ENCODE measurements at regions of chr7 and their contacts with region 1.

Region 1: DNA sequence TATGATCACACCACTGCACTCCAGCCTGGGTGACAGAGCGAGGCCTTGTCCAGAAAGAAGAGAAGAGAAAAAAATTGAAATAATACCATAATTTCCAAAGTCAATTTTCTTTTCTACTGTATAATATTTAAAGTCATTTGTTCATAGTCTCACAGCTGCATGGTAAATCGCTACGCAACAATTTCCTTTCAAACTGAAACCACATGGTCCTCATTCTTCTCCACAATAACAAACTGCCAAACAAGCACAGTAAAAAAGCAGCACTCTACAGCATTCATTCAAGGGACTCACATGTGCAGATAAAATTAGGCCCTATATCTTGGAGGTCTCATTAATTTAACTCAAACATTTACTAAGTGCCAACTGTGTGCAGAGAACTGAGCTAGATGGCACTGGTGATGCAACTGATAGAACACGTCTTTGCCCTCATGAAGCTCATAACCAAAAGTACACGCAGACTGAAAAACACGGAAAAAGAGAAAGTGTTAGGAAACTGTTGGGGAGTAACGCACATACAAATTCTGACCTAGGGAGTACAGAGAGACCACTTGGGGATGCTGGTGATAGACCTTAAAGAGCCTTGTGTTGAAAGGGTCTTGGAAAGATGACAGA is 68.4 kb upstream of the SRRM3 start:
- DNase-seq: no peak
- H3K4me3 Mint-ChIP-seq: peak overlapping the region; percentile 1
- H3K27ac Mint-ChIP-seq: no peak overlapping the region
- H3K4me1 Mint-ChIP-seq: peaks cover 9% of the 10 kb centered on the region
- H3K27me3 Mint-ChIP-seq: peaks cover 16% of the 10 kb centered on the region

Region 2: GRCh38 chr7:75878769-75879611 is 254.3 kb before region 1 on chr7 and contains the start of gene RHBDD2:
- CTCF ChIA-PET with region 1: no interaction called
- POLR2A ChIA-PET with region 1: no interaction called
- intact Hi-C with region 1: loop called (anchors 10 kb)
- DNase-seq: peak; percentile 98
- H3K4me3 Mint-ChIP-seq: peak within 1 kb of the TSS; percentile 96
- H3K27ac Mint-ChIP-seq: peak within 1 kb of the TSS; percentile 90
- H3K4me1 Mint-ChIP-seq: peaks cover 29% of the 10 kb centered on the region
- H3K27me3 Mint-ChIP-seq: no peaks in the 10 kb centered on the region
- total RNA-seq, gene RHBDD2: 30.1 to 31.9 TPM

Region 3: DNA sequence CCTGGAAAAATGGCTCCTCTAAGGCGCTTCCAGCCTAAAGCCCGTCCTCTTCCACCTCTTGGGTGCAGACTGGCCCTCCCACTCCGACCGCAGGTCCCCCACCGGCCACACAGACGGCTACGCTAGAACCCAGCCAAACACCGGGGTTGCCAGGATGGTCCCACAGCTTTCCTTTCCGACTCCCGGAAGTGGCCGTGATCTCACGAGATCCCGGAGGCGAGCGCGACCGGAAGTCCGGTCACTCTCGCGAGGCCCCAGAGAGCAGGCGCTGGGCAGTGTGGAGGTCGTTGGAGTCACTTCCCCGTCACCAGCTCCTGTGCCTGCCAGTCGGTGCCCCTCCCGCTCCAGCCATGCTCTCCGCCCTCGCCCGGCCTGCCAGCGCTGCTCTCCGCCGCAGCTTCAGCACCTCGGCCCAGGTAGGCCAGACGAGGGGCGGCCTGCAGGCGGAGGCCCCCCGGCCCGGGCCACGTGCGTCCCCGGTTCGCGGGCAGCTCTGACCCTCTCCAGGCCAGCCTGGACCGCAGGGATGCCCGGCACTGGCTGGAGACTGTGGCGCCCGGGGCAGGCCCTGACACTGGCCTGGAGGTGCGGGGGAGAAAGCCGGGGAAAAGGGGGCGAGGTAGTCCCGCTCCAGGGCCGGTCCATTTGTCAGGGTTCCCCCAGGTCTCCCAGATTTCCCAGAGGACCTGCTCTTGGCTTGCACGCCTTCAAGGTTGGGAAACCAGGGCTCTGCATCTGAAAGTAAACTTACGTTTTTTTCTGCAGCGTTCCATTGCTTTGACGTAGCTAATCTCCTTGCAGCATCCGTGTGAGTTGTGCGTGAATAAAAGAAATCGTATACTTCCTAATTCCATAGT is 85.2 kb before region 1 on chr7 and contains the starts of genes MDH2 and STYXL1:
- CTCF ChIA-PET with region 1: no interaction called
- POLR2A ChIA-PET with region 1: interaction called, 3 read pairs
- intact Hi-C with region 1: loop called (anchors 2 kb)
- DNase-seq: peak; percentile 96
- H3K4me3 Mint-ChIP-seq: peak within 1 kb of the TSS; percentile 92
- H3K27ac Mint-ChIP-seq: peak within 1 kb of the TSS; percentile 90
- H3K4me1 Mint-ChIP-seq: peaks cover 42% of the 10 kb centered on the region
- H3K27me3 Mint-ChIP-seq: no peaks in the 10 kb centered on the region
- total RNA-seq, gene MDH2: 259 to 271 TPM
- total RNA-seq, gene STYXL1: 37.8 to 40.5 TPM

Region 4: GRCh38 chr7:76155938-76156337 is 22.7 kb after region 1 on chr7:
- CTCF ChIA-PET with region 1: no interaction called
- POLR2A ChIA-PET with region 1: no interaction called
- intact Hi-C with region 1: loop called (anchors 1 kb)
- DNase-seq: no peak
- H3K4me3 Mint-ChIP-seq: no peak overlapping the region
- H3K27ac Mint-ChIP-seq: no peak overlapping the region
- H3K4me1 Mint-ChIP-seq: peaks cover 15% of the 10 kb centered on the region
- H3K27me3 Mint-ChIP-seq: no peaks in the 10 kb centered on the region

Region 5: DNA sequence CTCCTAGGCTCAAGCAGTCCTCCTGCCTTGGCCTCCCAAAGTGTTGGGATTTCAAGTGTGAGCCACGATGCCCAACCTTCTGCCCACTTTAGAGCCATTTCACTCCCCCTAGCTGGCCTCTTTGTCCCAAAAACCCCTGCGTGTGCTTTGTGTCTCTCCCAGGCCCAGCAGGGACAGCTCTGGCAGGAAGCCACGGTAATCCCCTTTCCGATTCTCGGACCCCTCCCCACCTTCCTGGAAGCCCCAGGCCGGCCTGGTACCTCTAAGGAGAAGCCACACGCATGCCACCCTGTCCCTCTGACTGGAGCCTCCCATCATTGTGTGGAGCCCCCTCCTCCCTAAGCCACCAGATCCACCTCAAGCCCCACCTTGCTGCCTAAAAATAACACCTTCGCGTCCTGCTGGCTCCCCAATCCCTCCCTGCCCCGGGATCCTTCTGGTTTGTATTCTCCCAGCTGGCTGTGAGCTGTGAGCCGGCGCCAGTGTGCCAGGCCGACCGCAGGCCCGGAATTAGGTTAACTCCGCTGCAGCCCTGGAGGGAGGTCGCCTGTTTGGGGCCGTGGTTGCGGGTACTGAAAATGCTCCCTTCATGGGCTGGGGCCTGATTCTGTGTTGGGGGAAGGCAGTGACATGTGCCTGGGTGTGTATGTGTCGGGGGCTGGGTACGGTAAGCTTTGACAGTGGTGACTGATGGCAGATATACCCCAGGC is 52.1 kb after region 1 on chr7:
- CTCF ChIA-PET with region 1: no interaction called
- POLR2A ChIA-PET with region 1: no interaction called
- intact Hi-C with region 1: no loop called
- DNase-seq: no peak
- H3K4me3 Mint-ChIP-seq: no peak overlapping the region
- H3K27ac Mint-ChIP-seq: no peak overlapping the region
- H3K4me1 Mint-ChIP-seq: no peaks in the 10 kb centered on the region
- H3K27me3 Mint-ChIP-seq: no peaks in the 10 kb centered on the region

Region 6: DNA sequence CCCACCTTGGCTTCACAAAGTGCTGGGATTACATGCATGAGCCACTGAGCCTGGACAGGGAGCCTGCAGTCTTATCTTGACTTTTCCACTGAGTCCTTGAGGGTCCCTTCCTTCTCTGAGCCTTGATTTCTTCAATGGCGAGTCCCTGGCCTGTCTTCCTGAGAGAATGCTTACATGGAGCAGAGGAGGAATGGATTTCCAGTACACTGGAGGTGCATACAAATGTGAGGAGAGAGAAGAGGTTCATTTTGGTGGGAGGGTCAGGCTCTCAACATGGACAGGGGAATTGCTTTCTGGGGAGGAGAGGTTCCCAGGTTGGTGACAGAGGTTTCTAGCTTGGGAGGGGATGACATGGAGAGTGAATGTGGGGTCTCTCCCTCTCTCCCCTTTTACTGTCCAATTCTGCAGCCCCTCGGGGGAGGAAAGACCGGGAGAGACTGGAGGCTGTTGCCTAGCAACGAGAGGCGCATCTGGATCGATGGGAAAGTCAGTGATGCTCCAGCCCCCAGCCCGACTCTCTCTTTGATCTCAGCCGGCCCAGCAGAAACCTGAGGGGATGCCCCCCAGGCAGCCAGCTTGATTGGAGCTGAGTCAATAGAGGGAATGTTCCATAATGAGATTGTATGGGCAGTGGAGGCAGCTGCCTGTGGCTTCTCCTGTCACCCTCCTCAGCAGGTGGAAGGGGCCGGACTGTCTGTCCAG is 83.3 kb after region 1 on chr7:
- CTCF ChIA-PET with region 1: no interaction called
- POLR2A ChIA-PET with region 1: no interaction called
- intact Hi-C with region 1: no loop called
- DNase-seq: no peak
- H3K4me3 Mint-ChIP-seq: no peak overlapping the region
- H3K27ac Mint-ChIP-seq: no peak overlapping the region
- H3K4me1 Mint-ChIP-seq: no peaks in the 10 kb centered on the region
- H3K27me3 Mint-ChIP-seq: peaks cover 30% of the 10 kb centered on the region